WTC11 (cell line): ENCODE measurements at regions of chr9 and their contacts with region 1.

Region 1: DNA sequence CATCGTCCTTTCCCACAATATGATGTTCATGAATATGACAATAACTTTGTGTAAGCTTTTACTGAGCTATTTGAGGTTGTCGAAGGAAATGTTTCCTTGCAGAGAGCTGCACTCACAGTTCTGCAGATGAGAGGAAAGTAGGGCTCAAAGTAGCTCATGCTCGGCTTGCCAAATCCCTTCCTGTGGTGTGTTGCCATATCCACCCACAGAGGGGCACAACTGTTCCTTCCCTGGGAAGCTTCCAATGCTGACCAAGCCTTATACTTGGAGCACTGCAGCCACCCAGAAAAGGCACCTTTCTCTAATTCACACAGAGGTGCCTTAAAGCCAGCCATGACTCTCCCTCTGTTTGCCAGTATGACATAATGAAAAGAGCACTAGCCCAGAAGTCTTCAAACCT is 390.3 kb downstream of the CAAP1 start:
- DNase-seq: peak; percentile 64
- ATAC-seq: peak; percentile 100
- H3K4me3 Mint-ChIP-seq: no peak overlapping the region
- H3K27ac Mint-ChIP-seq: no peak overlapping the region
- H3K4me1 Mint-ChIP-seq: no peaks in the 10 kb centered on the region
- H3K27me3 Mint-ChIP-seq: no peaks in the 10 kb centered on the region
- CTCF ChIP-seq: peak; percentile 43; the same call in 1 of the 2 replicates

Region 2: GRCh38 chr9:26551971-26552370 is 49.7 kb after region 1 on chr9:
- CTCF ChIA-PET with region 1: no interaction called
- POLR2A ChIA-PET with region 1: no interaction called
- DNase-seq: no peak
- ATAC-seq: no peak
- H3K4me3 Mint-ChIP-seq: no peak overlapping the region
- H3K27ac Mint-ChIP-seq: no peak overlapping the region
- H3K4me1 Mint-ChIP-seq: peaks cover 5% of the 10 kb centered on the region; the same call in 1 of the 2 replicates
- H3K27me3 Mint-ChIP-seq: no peaks in the 10 kb centered on the region
- CTCF ChIP-seq: no peak

Region 3: GRCh38 chr9:26606756-26607155 is 104.4 kb after region 1 on chr9:
- CTCF ChIA-PET with region 1: interaction called, 11 read pairs
- POLR2A ChIA-PET with region 1: no interaction called
- DNase-seq: no peak
- ATAC-seq: no peak
- H3K4me3 Mint-ChIP-seq: no peak overlapping the region
- H3K27ac Mint-ChIP-seq: no peak overlapping the region
- H3K4me1 Mint-ChIP-seq: peaks cover 38% of the 10 kb centered on the region
- H3K27me3 Mint-ChIP-seq: no peaks in the 10 kb centered on the region
- CTCF ChIP-seq: no peak

Region 4: GRCh38 chr9:26612211-26612610 is 109.9 kb after region 1 on chr9:
- CTCF ChIA-PET with region 1: interaction called, 45 read pairs
- POLR2A ChIA-PET with region 1: no interaction called
- DNase-seq: no peak
- ATAC-seq: no peak
- H3K4me3 Mint-ChIP-seq: no peak overlapping the region
- H3K27ac Mint-ChIP-seq: no peak overlapping the region
- H3K4me1 Mint-ChIP-seq: peaks cover 24% of the 10 kb centered on the region
- H3K27me3 Mint-ChIP-seq: no peaks in the 10 kb centered on the region; the same call in 1 of the 2 replicates
- CTCF ChIP-seq: no peak

Region 5: DNA sequence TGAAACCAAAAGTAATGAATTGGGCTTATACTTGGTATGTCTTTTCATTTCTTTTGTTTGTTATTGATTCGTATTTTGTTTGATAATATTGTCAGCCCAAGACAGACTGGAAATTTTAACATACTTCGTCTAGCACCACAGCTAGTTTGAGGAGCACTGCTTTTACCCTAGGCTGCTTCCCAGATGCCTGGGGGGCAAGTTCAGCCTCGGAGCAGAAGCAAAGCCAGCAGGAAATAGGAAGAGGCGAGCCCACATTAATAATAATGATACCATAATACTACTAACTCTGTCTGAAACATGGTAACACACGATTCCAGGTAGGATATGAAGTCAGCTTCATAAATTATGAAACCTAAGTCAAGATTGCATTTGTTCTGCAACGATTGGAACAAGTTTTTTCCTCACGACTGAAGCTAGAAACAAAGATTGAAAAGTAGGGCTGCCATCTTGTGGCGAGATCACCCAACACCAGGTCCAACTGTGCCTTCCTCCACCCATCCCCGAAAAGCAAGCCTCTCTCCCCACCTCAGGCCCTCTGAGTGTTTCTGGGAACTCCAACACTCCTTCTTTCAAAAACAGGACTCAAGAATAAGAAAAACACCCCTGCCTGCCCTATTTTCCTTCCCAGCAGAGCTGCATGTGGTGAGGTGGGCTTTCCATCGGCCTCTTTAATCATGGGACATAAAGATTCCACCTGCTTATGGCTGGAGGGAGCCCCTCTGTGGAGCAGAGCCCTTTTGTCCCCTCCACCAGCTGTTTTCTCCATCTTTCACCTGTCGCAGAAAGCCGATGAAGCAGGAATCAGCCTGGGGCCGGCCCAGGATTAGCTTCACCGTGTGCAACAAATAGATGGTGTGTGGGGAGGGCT is 153.9 kb after region 1 on chr9:
- CTCF ChIA-PET with region 1: interaction called, 43 read pairs
- POLR2A ChIA-PET with region 1: no interaction called
- DNase-seq: peak; percentile 56
- ATAC-seq: peak; percentile 96
- H3K4me3 Mint-ChIP-seq: no peak overlapping the region; the same call in 1 of the 2 replicates
- H3K27ac Mint-ChIP-seq: no peak overlapping the region
- H3K4me1 Mint-ChIP-seq: peaks cover 6% of the 10 kb centered on the region
- H3K27me3 Mint-ChIP-seq: no peaks in the 10 kb centered on the region
- CTCF ChIP-seq: peak; percentile 32; the same call in 1 of the 2 replicates

Region 6: DNA sequence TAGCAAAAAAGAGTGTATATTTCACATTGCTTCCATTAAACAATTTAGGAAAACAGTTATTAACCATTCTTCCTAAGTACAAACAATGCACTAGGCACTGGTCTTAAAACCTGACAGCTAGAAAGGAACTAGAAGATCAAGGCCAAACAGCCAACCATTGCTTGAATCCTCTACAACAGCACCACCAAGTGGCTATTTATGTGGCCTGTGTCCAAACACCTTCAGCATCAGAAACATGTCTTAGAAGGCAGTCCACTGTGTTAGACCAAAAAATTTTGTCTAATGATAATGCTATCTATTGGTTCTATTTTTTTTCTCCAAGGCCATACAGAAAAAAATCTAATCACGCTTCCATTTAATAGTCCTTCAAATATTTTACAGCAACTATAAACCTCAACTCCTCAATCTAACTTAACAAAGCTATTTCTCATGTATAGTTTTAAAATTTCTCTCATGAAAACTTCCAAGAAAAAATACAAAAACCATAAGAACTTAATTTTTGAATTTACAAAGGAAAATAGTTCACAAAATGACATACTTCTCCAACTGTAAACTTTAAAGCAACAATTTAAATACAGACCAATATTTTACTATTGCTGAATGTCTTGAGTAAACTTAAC is 354.2 kb after region 1 on chr9:
- CTCF ChIA-PET with region 1: interaction called, 12 read pairs
- POLR2A ChIA-PET with region 1: no interaction called
- DNase-seq: peak; percentile 46
- ATAC-seq: peak; percentile 81
- H3K4me3 Mint-ChIP-seq: no peak overlapping the region
- H3K27ac Mint-ChIP-seq: no peak overlapping the region
- H3K4me1 Mint-ChIP-seq: no peaks in the 10 kb centered on the region
- H3K27me3 Mint-ChIP-seq: no peaks in the 10 kb centered on the region
- CTCF ChIP-seq: peak; percentile 48